ENCODE measurements at regions of chr11 and their contacts with region 1.

Region 1: DNA sequence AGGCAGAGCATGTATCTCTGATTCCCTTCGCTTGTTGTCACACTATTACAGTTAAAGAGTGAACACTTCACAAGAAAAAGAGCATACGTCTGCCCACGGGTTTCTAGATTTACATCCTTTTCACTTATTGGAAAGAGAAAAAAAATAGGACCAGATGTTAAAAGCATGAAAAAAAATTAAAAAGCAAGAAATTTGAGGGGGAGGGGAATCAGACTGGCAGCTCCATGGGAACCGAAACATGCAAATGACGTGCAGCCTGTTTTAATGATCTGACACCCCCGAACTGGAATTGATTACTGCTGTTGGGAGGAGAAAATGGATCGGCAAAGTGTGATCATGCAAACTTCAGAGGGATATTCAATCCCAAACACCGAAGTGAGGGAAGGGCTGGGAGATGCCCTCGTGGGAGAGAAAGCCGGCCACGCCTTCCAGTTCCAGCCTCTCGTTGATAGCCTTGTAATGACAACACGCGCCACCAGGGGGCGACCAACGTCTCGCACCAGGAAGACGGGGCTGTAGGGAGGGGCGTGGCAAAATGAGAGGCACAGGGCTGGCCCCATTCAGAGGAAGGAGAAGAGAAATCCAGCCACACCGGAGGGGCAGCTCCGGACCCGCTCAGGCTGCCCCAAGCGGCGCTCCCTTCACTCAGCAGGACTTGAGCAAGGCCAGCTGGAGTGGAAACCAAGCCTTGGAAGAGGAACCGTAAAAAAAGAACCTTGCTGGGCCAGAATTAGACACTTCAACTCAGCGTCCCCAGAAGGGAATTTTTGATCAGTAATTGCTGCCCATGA is 53.8 kb upstream of the SYT13 start:
- DNase-seq: peak; percentile 63
- H3K4me3 ChIP-seq: no peak overlapping the region
- CTCF ChIP-seq: peak; percentile 74

Region 2: GRCh38 chr11:44936525-44936924 is 403.4 kb before region 1 on chr11:
- in situ Hi-C with region 1: loop called (anchors 25 kb)
- DNase-seq: peak; percentile 64
- H3K4me3 ChIP-seq: no peak overlapping the region
- CTCF ChIP-seq: peak; percentile 89

Region 3: DNA sequence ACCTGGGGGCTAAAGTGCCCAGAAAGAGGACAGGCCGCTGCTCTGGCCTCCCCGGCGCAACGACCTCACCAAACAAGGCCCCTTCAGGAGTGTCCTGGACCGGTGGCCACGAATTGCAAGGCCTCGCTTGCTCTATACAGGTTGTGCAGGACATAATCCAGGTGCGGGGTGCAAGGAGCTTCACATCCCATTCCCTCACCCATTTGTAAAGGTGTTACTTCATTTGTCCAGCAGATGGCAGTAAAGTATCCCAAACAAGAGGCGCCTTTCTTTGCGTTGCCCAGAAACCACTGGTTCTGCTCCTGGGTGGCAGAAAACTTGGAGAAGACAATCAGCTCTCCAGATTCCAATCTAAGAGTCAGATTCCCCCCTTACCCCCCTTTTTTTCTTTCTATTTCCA is 229.4 kb before region 1 on chr11:
- in situ Hi-C with region 1: loop called (anchors 5 kb)
- DNase-seq: peak; percentile 74
- H3K4me3 ChIP-seq: no peak overlapping the region
- CTCF ChIP-seq: peak; percentile 70

Region 4: GRCh38 chr11:45280449-45280848 is 59.5 kb before region 1 on chr11:
- in situ Hi-C with region 1: no loop called
- DNase-seq: no peak
- H3K4me3 ChIP-seq: no peak overlapping the region
- CTCF ChIP-seq: no peak

Region 5: GRCh38 chr11:45371251-45372115 is 31.6 kb after region 1 on chr11:
- in situ Hi-C with region 1: no loop called
- DNase-seq: peak; percentile 39
- H3K4me3 ChIP-seq: no peak overlapping the region
- CTCF ChIP-seq: peak; percentile 98

Measured in astrocyte of the cerebellum (primary cell).